ENCODE measurements at regions of chr16 and their contacts with region 1.

Region 1: GRCh38 chr16:68704232-68704867 is 32.7 kb upstream of the CDH1 start:
- DNase-seq: peak; percentile 62 to 97 (median 84)

Region 2: DNA sequence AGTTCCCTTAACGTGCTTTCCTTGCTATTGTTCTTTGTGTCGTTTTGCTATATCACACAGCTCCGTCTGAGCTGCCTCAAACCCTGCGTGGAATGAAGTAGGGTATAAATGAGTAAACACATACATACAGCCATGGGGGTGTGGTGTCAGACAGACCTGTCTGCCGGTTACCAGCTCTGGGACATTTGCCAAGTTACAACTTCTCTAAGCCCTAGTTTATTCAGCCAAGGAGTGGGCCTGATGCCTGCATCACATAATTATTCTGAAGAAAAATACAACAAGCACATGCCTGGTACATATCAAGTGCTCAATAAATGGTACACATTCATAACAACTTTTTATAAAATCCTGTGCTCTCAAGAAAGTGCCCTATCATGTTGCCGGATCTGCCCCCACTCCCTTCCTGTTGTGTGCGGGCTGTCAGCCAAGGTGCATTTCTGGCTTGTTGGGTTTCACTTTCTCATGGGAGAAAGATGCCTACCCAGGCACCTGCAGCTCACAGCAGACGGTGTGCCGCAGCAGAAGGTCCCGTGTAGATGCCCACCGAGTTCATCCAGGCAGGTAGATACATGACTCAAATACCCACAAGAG is 286.5 kb before region 1 on chr16:
- intact Hi-C with region 1: no loop called
- DNase-seq: peak in 1 of 10 donors; percentile 82

Region 3: GRCh38 chr16:68486502-68487202 is 217.7 kb before region 1 on chr16:
- intact Hi-C with region 1: no loop called
- DNase-seq: peak in 1 of 10 donors; percentile 49

Region 4: GRCh38 chr16:68599586-68599985 is 104.8 kb before region 1 on chr16:
- intact Hi-C with region 1: no loop called
- DNase-seq: no peak

Region 5: DNA sequence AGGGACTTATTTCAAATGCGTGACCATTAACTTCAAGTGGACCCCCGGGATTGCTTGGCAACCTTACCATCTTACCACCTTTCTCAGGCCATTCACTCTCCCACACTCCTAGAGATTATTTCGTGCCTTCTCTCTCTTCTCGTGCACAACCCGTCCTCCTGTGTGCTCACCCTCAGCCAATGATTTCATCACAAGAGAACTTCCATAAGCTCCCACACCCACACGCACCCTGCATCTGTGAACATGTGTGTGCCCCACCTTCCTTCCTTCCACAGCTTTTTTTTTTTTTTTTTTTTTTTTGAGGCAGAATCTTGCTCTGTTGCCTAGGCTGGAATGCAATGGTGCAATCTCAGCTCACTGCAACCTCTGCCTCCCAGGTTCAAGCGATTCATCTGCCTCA is 86.6 kb before region 1 on chr16:
- intact Hi-C with region 1: no loop called
- DNase-seq: peak in 1 of 10 donors; percentile 16

Region 6: DNA sequence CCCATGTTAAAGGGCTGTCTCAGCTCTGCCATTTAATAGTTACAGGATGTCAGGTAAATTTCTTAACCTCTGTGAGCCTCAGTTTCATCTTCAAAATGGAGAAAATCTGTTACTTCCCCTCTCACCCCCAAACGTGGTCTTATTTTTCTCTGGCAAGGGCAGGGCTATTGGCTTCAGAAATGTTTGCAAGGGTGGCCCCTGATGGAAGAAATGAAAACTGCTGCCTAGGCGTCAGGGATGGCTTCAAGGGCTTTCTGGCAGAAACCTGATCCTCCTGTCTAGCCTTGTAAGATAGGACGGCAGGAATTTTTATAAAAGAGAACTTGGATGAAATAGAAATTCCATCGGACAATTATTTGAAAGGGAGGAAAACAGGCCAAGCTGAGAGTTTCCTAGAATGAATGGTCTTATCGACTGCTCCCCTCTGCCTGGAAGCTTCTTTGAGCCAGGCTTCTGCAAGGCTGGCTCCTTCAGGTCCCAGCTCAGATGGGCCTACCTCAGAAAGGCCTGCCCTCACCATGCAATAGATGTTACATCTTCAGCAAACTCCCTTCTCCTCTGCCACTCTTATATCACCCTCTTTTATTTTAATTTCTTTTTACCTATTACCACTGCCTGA is 96.0 kb after region 1 on chr16:
- intact Hi-C with region 1: loop called (anchors 1 kb)
- DNase-seq: peak in 6 of 10 donors; percentile 13 to 92 (median 60)

Region 7: DNA sequence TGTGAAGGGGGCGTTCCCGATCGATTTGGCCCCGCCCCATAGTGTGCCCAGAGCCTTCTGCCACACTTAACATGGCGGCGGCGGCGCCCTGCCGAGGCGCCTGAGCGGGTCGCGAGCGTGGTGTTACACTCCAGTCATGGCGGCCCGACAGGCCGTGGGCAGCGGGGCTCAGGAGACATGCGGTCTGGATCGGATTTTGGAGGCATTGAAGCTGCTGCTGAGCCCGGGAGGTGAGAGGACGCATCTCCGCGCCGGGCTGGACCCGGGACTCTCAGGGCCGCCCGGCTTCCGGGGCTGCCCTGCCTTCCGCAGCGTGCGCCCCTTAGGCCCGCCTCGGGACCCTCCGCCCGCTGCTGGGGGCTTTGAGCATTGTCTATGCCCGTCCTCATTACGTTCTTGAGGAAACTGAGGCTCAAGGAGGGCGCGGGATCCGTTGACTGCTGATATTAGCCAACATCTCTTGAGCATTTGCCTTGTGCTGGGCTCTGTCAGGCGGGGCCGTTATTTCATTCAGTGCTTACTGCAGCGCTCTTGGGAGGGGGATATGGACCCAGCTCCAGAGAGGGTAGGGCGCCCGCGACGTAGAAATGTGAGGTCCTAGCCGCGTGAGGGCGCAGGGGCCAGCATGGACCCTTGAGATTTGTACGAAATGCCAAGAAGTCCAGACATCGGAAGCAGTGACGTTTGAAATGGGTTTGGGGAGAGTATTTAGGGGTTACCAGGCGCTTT is 139.3 kb after region 1 on chr16 and contains the start of gene TANGO6:
- intact Hi-C with region 1: loop called (anchors 5 kb)
- DNase-seq: peak; percentile 73 to 97 (median 85)

Measured in posterior cingulate gyrus (tissue), 11 donors.